ENCODE measurements at regions of chr14 and their contacts with region 1.

Region 1: GRCh38 chr14:22900081-22900799 is 17.2 kb downstream of the REM2 start:
- DNase-seq: peak; percentile 70
- H3K4me3 ChIP-seq: no peak overlapping the region
- H3K27ac ChIP-seq: no peak overlapping the region
- H3K4me1 ChIP-seq: no peaks in the 10 kb centered on the region
- H3K27me3 ChIP-seq: no peaks in the 10 kb centered on the region
- CTCF ChIP-seq: peak; percentile 38 to 65
- POLR2A ChIP-seq: no peak

Region 2: GRCh38 chr14:22773162-22774010 is 126.9 kb before region 1 on chr14:
- CTCF ChIA-PET with region 1: no interaction called
- POLR2A ChIA-PET with region 1: no interaction called
- dilution Hi-C with region 1: no loop called
- intact Hi-C with region 1: loop called (anchors 2 kb)
- DNase-seq: no peak
- H3K4me3 ChIP-seq: no peak overlapping the region
- H3K27ac ChIP-seq: no peak overlapping the region
- H3K4me1 ChIP-seq: peaks cover 9% of the 10 kb centered on the region
- H3K27me3 ChIP-seq: no peaks in the 10 kb centered on the region
- CTCF ChIP-seq: no peak
- POLR2A ChIP-seq: no peak

Region 3: DNA sequence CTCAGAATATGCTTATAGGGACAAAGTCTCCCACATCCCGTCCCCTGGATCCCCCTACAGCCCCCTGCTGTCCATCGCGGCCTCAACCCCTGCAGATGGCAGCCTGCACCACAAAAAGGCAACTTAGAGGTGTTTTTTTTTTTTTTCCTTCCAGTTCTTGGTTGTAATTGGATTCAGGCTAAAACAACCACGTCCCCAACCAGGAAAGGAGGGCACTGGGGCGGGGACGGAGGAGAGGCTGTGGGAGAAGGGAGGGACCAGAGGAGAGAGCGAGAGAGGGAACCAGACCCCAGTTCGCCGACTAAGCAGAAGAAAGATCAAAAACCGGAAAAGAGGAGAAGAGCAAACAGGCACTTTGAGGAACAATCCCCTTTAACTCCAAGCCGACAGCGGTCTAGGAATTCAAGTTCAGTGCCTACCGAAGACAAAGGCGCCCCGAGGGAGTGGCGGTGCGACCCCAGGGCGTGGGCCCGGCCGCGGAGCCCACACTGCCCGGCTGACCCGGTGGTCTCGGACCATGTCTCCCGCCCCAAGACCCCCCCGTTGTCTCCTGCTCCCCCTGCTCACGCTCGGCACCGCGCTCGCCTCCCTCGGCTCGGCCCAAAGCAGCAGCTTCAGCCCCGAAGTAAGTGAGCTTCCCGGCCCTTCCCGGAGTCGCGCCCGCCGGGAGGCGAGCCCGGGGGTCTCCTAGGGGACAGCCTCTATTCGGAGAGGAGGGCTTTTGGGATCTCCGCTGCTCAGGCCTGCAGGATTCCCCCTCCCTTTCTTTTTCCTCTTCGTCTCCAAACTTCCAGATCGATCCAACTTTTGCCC is 63.7 kb before region 1 on chr14 and contains the start of gene MMP14:
- CTCF ChIA-PET with region 1: interaction called, 3 read pairs
- POLR2A ChIA-PET with region 1: no interaction called
- dilution Hi-C with region 1: no loop called
- intact Hi-C with region 1: loop called (anchors 1 kb)
- DNase-seq: peak; percentile 92
- H3K4me3 ChIP-seq: peak within 1 kb of the TSS; percentile 75 to 94 (median 86)
- H3K27ac ChIP-seq: peak within 1 kb of the TSS; percentile 84
- H3K4me1 ChIP-seq: peaks cover 32% of the 10 kb centered on the region
- H3K27me3 ChIP-seq: no peaks in the 10 kb centered on the region
- CTCF ChIP-seq: peak; percentile 26 to 54
- POLR2A ChIP-seq: peak; percentile 95
- total RNA-seq, gene MMP14: 603 and 615 TPM in 2 replicates

Region 4: DNA sequence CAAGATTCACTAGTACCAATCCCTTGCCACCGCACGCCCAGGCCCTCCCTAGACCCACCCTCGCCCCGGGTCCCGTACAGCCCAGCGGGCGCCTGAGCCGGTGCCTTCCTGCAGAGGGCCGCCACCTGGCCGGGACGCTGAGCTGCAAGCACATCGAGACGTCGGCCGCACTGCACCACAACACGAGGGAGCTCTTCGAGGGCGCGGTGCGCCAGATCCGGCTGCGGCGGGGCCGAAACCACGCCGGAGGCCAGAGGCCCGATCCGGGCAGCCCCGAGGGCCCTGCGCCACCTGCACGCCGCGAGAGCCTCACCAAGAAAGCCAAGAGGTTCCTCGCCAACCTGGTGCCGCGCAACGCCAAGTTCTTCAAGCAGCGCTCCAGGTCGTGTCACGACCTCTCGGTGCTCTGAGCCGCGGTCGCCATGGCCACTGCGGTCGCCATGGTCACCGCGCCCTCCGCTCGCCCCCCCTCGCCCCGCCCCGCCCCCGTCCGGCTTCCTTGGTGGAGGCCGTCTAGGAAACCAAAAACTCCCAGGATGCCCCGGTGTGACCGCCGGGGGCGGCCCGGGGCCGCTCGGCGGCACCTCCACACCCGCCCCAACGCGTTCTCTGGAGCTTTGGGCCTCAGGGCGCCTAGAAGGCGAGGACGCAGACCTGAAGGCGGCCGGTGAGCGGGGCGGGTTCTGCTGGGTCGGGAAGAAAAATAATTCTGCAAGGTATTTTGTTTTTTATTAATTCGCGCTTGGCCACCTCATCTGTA is 13.6 kb before region 1 on chr14:
- CTCF ChIA-PET with region 1: interaction called, 80 read pairs
- POLR2A ChIA-PET with region 1: no interaction called
- dilution Hi-C with region 1: no loop called
- intact Hi-C with region 1: no loop called
- DNase-seq: peak; percentile 24
- H3K4me3 ChIP-seq: peak overlapping the region in 2 of 3 experiments; percentile 26 to 32
- H3K27ac ChIP-seq: no peak overlapping the region
- H3K4me1 ChIP-seq: no peaks in the 10 kb centered on the region
- H3K27me3 ChIP-seq: no peaks in the 10 kb centered on the region
- CTCF ChIP-seq: peak; percentile 6 to 37
- POLR2A ChIP-seq: no peak

Measured in endothelial cell of umbilical vein (primary cell).